ENCODE measurements at regions of chr16 and their contacts with region 1.

Region 1: DNA sequence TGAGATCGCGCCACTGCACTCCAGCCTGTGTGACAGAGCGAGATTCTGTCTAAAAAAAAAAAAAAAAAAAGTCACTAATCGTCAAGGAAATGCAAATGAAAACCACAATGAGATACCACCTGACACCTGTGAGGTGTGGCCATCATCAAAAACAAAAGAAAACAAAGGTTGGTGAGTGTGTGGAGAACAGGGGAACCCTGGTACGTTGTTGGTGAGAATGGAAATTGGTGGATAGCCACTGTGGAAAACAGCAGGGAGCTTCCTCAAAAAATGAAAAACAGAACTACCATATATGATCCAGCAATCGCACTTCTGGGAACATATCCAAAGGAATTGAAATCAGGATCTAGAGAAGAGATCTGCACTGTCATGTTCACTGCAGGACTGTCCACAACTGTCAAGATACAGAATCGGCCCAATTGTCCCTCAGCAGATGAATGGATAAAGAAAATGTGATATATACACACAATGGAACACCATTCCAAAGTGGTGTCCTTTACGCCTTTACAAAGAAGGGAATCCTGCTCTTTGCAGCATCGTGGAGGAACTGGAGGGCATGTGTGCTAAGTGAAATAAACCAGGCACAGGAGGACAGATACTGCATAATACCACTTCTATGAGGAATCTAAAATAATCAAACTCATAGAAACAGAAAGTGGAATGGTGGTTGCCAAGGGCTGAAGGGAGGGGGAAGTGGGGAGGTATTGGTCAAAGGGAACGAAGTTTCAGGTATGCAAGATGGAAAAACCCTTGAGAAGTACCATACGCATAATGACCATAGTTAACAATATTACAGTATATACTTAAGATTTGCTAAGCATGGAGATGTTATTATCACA is 63.5 kb upstream of the PLCG2 start:
- DNase-seq: no peak
- ATAC-seq: peak; percentile 33
- H3K4me3 Mint-ChIP-seq: no peak overlapping the region
- H3K27ac Mint-ChIP-seq: peak overlapping the region; percentile 74
- H3K4me1 Mint-ChIP-seq: peaks cover 47% of the 10 kb centered on the region
- H3K27me3 Mint-ChIP-seq: no peaks in the 10 kb centered on the region

Region 2: GRCh38 chr16:81632392-81633146 is 83.0 kb before region 1 on chr16:
- CTCF ChIA-PET with region 1: no interaction called
- POLR2A ChIA-PET with region 1: no interaction called
- intact Hi-C with region 1: loop called (anchors 2 to 5 kb)
- DNase-seq: peak; percentile 90
- ATAC-seq: peak; percentile 81
- H3K4me3 Mint-ChIP-seq: peak overlapping the region; percentile 47
- H3K27ac Mint-ChIP-seq: peak overlapping the region; percentile 97
- H3K4me1 Mint-ChIP-seq: peaks cover 67% of the 10 kb centered on the region
- H3K27me3 Mint-ChIP-seq: no peaks in the 10 kb centered on the region

Region 3: DNA sequence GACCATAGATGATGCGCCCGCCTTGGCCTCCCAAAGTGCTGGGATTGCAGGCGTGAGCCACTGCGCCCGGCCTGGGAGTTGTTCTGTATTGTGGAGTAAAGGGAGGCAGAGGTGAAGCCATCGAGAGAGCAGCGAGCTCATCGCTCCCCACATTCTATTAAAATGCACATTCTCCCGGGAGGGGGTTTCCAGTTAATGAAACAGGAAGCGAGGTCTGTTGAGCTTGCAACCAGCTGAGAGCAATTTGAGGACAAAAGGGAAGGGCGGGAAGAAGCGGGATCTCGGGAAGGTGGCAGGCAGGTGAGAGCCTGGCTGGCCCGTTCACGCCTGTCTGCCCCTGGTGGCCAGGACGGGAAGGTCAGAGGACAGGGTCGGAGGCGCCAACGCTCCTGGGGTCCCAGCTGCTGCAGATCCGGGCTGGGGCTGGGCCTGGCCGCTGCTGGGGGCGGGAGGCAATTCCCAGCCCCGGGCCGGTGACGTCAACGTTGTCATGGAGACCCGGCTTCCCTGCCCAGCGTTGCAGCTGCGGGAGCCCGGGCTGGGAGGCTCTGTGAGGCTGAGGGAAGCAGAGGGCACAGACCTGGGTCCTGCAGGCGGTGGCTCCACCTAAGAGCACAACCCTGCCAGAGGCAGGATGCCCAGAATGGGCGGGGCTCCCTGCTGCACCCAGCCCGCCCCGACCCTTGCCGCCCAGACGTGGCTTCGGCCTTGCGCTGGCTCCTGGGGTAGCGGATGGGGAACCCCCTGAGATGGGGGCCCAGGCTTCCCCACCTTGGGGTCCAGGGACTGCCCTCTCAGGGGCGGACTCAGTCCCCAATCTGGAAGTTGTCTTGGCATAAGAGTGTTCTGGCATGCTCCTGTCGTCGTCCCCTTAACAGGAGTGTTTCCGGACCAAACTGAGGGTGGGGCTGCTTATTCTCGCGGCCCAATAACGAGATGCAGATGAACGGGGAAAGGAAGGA is 14.8 kb after region 1 on chr16:
- CTCF ChIA-PET with region 1: interaction called, 13 read pairs
- POLR2A ChIA-PET with region 1: no interaction called
- intact Hi-C with region 1: no loop called
- DNase-seq: peak; percentile 74
- ATAC-seq: peak; percentile 93
- H3K4me3 Mint-ChIP-seq: peak overlapping the region; percentile 73
- H3K27ac Mint-ChIP-seq: peak overlapping the region; percentile 91
- H3K4me1 Mint-ChIP-seq: peaks cover 15% of the 10 kb centered on the region
- H3K27me3 Mint-ChIP-seq: no peaks in the 10 kb centered on the region

Region 4: DNA sequence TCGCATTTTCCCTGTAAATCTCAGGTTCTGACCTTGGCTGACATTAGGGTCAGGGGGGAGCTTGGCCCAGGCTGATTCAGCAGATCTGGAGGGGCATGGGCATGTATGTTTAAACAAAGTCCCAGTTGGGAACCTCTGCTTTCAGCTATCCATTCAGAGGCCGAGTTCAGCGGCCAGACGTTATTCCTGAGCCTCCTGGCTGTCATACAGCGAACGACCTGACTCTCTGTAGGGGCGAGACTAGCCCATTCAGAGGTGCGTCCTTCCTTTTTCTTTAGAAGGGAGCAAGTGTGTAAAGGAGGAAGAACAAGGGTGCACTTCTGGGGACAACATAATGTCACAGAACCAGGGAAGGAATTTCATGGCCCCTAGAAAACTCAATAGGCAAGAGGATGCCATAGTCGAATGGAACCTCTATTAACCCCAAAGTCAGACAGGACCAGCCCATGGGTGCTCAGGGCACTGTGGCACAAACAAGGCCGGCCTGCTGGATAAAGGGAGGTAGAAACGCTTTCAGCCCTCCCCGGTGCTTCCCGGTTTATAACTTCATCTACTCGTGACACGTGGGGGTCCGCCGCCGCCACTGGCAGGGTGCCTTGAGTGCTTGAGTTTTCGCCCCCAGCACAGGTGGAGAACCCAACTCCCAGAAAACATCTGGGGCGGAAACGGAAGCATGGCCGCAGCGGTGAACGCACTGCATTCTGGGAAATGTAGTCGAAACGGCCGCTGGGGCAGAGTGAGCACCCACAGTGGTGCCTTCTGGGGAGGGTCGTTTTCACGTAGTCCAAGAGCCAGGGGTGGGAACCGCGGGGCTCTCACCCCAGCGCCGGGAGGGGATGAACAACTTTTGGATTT is 30.4 kb after region 1 on chr16:
- CTCF ChIA-PET with region 1: no interaction called
- POLR2A ChIA-PET with region 1: no interaction called
- intact Hi-C with region 1: no loop called
- DNase-seq: peak; percentile 85
- ATAC-seq: peak; percentile 91
- H3K4me3 Mint-ChIP-seq: peak overlapping the region; percentile 73
- H3K27ac Mint-ChIP-seq: peak overlapping the region; percentile 87
- H3K4me1 Mint-ChIP-seq: peaks cover 16% of the 10 kb centered on the region
- H3K27me3 Mint-ChIP-seq: no peaks in the 10 kb centered on the region